Aorta (tissue), 5 donors: ENCODE measurements at regions of chr2 and their contacts with region 1.

Region 1: DNA sequence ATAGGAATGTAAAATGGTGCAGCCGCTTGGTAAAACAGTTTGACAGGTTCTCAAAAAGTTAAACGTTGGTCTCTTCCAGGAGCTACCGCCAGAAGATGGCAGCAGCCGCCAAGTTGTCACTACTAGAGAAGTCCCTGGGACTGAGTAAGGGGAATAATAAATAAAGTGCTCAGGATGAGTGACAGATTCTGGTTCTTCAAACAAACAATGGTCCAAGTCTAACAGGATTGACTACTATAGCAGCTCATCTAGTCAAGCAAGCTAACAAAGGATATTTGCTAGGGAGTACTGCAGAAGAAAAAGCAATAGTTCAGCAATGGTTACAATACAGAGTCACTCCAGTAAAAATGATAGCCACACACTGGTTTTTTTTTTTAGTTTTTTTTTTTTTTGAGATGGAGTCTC is 3.8 kb upstream of the ANAPC1 start:
- DNase-seq: peak; percentile 81 to 91
- ATAC-seq: no peak
- H3K4me3 ChIP-seq: no peak overlapping the region
- H3K27ac ChIP-seq: no peak overlapping the region
- H3K4me1 ChIP-seq: no peaks in the 10 kb centered on the region
- H3K27me3 ChIP-seq: no peaks in the 10 kb centered on the region

Region 2: DNA sequence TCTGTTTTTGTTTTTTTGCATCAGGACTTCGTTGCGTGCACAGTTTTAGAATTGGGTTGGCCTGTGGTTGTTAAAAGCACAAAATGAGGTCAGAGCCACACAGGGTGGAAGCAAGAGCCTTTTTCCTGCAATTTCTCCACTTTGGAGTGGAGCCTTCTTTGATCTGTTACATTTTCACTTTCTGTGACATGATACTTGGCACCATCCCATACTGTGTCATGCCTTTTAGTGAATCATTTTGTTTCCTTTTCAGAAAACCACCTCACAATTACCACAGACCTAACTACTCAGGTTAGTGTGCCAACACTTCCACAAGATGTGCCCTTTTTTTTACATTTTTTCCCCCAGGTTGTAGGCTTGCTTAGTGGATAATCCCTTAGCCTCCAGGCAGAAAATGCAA is 43.1 kb after region 1 on chr2:
- intact Hi-C with region 1: no loop called
- DNase-seq: no peak
- ATAC-seq: no peak
- H3K4me3 ChIP-seq: no peak overlapping the region
- H3K27ac ChIP-seq: no peak overlapping the region
- H3K4me1 ChIP-seq: no peaks in the 10 kb centered on the region
- H3K27me3 ChIP-seq: no peaks in the 10 kb centered on the region

Region 3: GRCh38 chr2:112048887-112049286 is 161.1 kb after region 1 on chr2:
- intact Hi-C with region 1: loop called in 1 of 2 experiments (anchors 2 kb)
- DNase-seq: no peak
- ATAC-seq: peak; percentile 92
- H3K4me3 ChIP-seq: no peak overlapping the region
- H3K27ac ChIP-seq: no peak overlapping the region
- H3K4me1 ChIP-seq: peaks cover 0 to 3% of the 10 kb centered on the region in 2 donors
- H3K27me3 ChIP-seq: no peaks in the 10 kb centered on the region